Gastrocnemius medialis (tissue), 4 donors: ENCODE measurements at regions of chr1 and their contacts with region 1.

Region 1: DNA sequence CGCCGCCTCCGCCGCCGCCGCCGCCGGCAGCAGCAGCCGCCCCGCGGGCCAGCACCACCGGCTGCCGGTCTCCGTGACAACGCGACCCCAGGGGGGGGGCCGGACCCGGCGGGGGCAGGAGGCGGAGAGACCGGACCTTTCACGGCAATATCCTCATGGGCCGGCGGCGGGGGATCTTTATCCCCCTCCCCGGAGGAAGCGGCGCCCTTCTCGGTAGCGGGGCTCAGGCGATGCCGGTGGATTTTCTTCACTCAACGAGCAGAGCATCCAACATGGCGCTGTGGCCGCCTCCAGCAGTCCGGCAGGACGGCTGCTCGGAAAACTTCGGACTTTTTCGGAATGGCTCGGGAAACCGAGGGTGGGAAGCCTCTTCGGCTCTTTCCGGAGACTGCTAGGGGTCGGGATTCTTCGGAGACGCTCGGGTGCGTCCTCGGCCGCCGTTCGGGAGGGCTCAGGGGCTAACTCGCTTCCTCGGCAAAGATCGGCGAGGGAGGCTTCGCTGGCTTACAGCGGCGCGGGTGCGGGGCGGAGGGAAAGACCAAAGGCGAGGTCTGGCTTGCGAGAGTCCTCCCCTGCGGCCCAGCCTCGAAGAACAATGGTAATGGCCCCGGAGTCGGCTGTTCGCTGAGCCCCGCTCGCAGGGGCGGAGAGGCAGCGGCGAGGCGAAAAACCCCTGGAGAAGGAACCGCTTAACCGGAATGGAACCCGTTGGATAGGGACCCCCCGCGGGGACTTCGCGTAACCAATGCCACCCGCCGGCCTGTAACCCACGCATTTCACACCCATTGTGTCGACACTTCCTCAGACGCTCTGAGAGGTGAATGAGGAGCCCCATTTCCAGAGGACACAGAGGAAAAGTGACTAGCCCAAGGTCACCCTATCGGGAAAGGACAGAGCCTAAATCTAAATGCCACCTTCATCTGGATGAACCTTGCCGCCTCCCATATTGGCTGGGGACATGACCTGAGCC is at the start of gene EIF4G3:
- DNase-seq: peak; percentile 97
- ATAC-seq: peak; percentile 90
- H3K4me3 ChIP-seq: peak within 1 kb of the TSS; percentile 65 to 99 (median 94)
- H3K27ac ChIP-seq: peak within 1 kb of the TSS; percentile 91 to 97 (median 94)
- H3K4me1 ChIP-seq: peaks cover 22 to 23% of the 10 kb centered on the region in 2 donors
- H3K27me3 ChIP-seq: no peaks in the 10 kb centered on the region
- CTCF ChIP-seq: no peak
- POLR2A ChIP-seq: peak; percentile 75
- total RNA-seq, gene EIF4G3: 42.1 to 63.2 (median 43.5) TPM

Region 2: GRCh38 chr1:20786253-20787028 is 390.4 kb before region 1 on chr1:
- in situ Hi-C with region 1: no loop called
- intact Hi-C with region 1: loop called (anchors 1 kb)
- DNase-seq: peak; percentile 93
- ATAC-seq: peak; percentile 84 to 89
- H3K4me3 ChIP-seq: peak overlapping the region; percentile 76 to 93 (median 86)
- H3K27ac ChIP-seq: peak overlapping the region; percentile 95 to 98 (median 98)
- H3K4me1 ChIP-seq: peaks cover 32 to 43% of the 10 kb centered on the region in 2 donors
- H3K27me3 ChIP-seq: no peaks in the 10 kb centered on the region
- CTCF ChIP-seq: no peak
- POLR2A ChIP-seq: peak; percentile 72 to 94

Region 3: DNA sequence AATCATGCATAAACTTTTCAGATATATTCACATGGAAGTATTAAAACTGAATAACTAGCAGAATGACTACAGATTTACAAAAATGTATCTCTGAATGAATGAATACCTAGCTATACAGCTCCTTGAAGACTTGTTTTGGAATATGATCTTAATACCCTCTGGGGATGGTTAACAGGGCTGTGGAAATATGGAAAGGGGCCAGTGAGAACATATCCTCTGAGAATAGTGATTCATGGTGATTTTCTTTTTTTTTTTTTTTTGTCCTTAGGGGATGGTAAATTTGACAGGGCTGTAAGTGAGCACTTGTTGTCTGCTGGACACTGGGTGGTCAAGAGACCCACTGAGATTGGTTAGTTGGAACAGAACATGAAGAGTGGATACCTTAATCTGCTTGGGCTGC is 309.0 kb before region 1 on chr1:
- in situ Hi-C with region 1: loop called in 1 of 4 experiments (anchors 25 kb)
- intact Hi-C with region 1: no loop called
- DNase-seq: no peak
- ATAC-seq: no peak
- H3K4me3 ChIP-seq: no peak overlapping the region
- H3K27ac ChIP-seq: no peak overlapping the region
- H3K4me1 ChIP-seq: no peaks in the 10 kb centered on the region
- H3K27me3 ChIP-seq: no peaks in the 10 kb centered on the region
- CTCF ChIP-seq: no peak
- POLR2A ChIP-seq: no peak

Region 4: GRCh38 chr1:20981915-20982314 is 195.0 kb before region 1 on chr1:
- in situ Hi-C with region 1: loop called (anchors 5 to 25 kb)
- intact Hi-C with region 1: no loop called
- DNase-seq: no peak
- ATAC-seq: peak; percentile 48 to 61
- H3K4me3 ChIP-seq: no peak overlapping the region
- H3K27ac ChIP-seq: peak overlapping the region in 3 of 4 donors; percentile 12 to 49 (median 14)
- H3K4me1 ChIP-seq: peaks cover 18 to 26% of the 10 kb centered on the region in 2 donors
- H3K27me3 ChIP-seq: no peaks in the 10 kb centered on the region
- CTCF ChIP-seq: peak in 1 of 5 experiments; percentile 9
- POLR2A ChIP-seq: no peak

Region 5: GRCh38 chr1:20992322-20993056 is 184.4 kb before region 1 on chr1:
- in situ Hi-C with region 1: loop called in 2 of 4 experiments (anchors 25 kb)
- intact Hi-C with region 1: loop called (anchors 5 kb)
- DNase-seq: no peak
- ATAC-seq: peak; percentile 87 to 92
- H3K4me3 ChIP-seq: peak overlapping the region in 1 of 4 donors; percentile 31
- H3K27ac ChIP-seq: peak overlapping the region; percentile 63 to 83 (median 82)
- H3K4me1 ChIP-seq: peaks cover 42 to 46% of the 10 kb centered on the region in 2 donors
- H3K27me3 ChIP-seq: no peaks in the 10 kb centered on the region
- CTCF ChIP-seq: no peak
- POLR2A ChIP-seq: no peak

Region 6: DNA sequence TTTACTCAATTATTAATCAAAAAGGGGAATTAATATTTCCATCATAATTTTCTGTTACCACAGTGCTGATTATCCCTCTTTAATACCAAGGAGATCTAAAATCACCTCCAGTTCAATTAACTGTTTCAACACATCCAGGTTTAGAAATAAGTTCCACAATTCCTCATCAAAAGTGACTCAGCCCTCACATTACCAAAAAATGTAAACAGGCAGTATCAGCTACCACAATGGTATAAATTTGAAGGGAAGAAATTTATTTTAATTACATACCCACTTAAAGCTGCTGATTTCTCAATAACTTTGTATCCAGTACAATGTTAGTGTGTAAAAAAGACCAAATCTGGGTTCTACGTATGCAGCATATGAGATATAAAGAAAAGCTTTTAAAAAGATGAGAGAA is 52.0 kb before region 1 on chr1:
- in situ Hi-C with region 1: no loop called
- intact Hi-C with region 1: no loop called
- DNase-seq: no peak
- ATAC-seq: no peak
- H3K4me3 ChIP-seq: no peak overlapping the region
- H3K27ac ChIP-seq: no peak overlapping the region
- H3K4me1 ChIP-seq: peaks cover 0 to 8% of the 10 kb centered on the region in 2 donors
- H3K27me3 ChIP-seq: no peaks in the 10 kb centered on the region
- CTCF ChIP-seq: no peak
- POLR2A ChIP-seq: no peak

Region 7: DNA sequence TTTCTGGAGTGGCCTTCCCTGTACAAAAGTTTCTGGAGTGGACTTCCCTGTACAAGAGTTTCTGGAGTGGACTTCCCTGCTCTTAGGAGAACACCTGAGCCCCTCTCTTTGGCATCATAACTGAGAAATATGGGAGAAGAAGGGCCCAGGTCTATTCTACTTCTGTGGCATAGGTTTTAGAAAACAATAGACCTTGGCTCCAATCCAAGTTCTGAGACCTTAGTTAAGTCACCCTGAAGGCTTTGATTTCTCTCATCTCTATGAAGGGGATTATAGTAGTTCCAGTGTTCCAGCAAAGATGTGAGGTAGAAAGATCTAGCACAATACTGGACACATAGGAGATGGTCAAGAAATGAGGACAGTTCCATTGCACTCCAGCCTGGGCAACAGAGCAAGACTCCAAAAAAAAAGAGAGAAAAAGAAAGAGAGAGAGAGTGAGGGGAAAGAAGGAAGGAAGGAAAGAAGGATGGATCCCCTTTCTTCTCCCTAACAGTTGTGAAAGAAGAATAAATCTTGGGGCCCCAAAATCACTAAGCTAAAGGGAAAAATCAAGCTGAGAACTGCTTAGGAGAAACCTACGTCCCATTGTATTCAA is 13.1 kb after region 1 on chr1:
- in situ Hi-C with region 1: no loop called
- intact Hi-C with region 1: no loop called
- DNase-seq: no peak
- ATAC-seq: no peak
- H3K4me3 ChIP-seq: no peak overlapping the region
- H3K27ac ChIP-seq: no peak overlapping the region
- H3K4me1 ChIP-seq: peaks cover 13 to 23% of the 10 kb centered on the region in 2 donors
- H3K27me3 ChIP-seq: no peaks in the 10 kb centered on the region
- CTCF ChIP-seq: no peak
- POLR2A ChIP-seq: no peak